MCF 10A (cell line): ENCODE measurements at regions of chr1 and their contacts with region 1.

Region 1: GRCh38 chr1:178898401-178898800 is 27.5 kb upstream of the ANGPTL1 start:
- DNase-seq: no peak
- H3K4me3 Mint-ChIP-seq: no peak overlapping the region
- H3K27ac Mint-ChIP-seq: no peak overlapping the region
- H3K4me1 Mint-ChIP-seq: no peaks in the 10 kb centered on the region
- H3K27me3 Mint-ChIP-seq: no peaks in the 10 kb centered on the region
- CTCF ChIP-seq: no peak

Region 2: DNA sequence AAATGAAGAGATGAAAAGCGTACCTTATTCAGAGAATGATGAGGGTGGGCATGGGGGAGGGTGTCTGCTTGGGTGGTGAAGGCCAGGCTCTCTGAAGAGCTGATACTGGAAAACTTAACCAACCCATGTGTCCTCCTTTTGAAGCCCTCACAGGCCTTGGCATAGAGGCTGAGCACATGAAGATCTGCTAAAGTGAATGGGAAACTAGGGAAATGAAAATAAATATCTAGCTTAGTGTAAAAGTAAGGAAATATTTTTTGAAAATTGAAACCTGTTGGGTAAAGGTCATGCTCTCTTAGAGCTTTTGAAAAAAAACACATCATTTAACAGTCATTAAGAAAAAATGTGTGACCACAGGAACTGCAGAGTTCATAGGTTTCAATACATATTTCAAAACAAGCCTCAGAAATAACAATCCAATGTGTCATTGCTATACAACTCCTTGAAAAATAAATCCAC is 213.8 kb before region 1 on chr1:
- CTCF ChIA-PET with region 1: no interaction called
- POLR2A ChIA-PET with region 1: no interaction called
- intact Hi-C with region 1: no loop called
- DNase-seq: peak; percentile 89
- H3K4me3 Mint-ChIP-seq: no peak overlapping the region
- H3K27ac Mint-ChIP-seq: peak overlapping the region; percentile 73
- H3K4me1 Mint-ChIP-seq: peaks cover 42% of the 10 kb centered on the region
- H3K27me3 Mint-ChIP-seq: no peaks in the 10 kb centered on the region
- CTCF ChIP-seq: no peak

Region 3: DNA sequence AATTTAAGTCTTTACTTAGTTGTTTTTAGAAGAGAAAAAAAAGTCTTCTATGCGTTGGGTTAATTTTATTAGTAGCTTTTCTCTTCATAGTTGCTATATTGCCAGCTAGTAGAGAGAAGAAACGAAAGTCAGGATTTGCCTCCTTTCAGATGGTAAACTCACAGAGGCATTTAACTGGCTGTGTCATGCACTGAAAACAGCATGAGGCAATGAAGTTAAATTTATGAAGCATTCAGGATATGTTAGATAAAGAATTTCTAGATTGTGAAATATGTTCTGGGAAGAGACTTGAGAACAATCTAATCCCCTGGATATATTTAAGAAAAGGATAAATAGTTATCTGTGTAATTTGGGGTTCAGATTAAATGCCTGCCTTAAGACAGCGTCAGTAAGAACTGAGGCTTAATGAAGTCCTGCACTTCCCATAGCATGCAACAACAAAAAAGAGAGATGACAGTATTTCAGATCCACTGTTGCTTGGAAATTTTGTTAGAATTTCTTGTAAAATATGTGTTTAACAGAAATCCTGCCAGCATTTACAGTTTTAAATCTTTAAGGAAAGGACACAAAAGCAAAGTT is 29.2 kb before region 1 on chr1:
- CTCF ChIA-PET with region 1: no interaction called
- POLR2A ChIA-PET with region 1: no interaction called
- intact Hi-C with region 1: loop called (anchors 5 kb)
- DNase-seq: peak; percentile 4
- H3K4me3 Mint-ChIP-seq: no peak overlapping the region
- H3K27ac Mint-ChIP-seq: no peak overlapping the region
- H3K4me1 Mint-ChIP-seq: no peaks in the 10 kb centered on the region
- H3K27me3 Mint-ChIP-seq: no peaks in the 10 kb centered on the region
- CTCF ChIP-seq: no peak

Region 4: GRCh38 chr1:179337288-179337687 is 438.9 kb after region 1 on chr1:
- CTCF ChIA-PET with region 1: no interaction called
- POLR2A ChIA-PET with region 1: no interaction called
- intact Hi-C with region 1: no loop called
- DNase-seq: no peak
- H3K4me3 Mint-ChIP-seq: no peak overlapping the region
- H3K27ac Mint-ChIP-seq: peak overlapping the region; percentile 22
- H3K4me1 Mint-ChIP-seq: no peaks in the 10 kb centered on the region
- H3K27me3 Mint-ChIP-seq: no peaks in the 10 kb centered on the region
- CTCF ChIP-seq: no peak